ENCODE measurements at regions of chr4 and their contacts with region 1.

Region 1: GRCh38 chr4:20251796-20252655 is at the start of gene SLIT2:
- DNase-seq: peak; percentile 92
- H3K4me3 ChIP-seq: peak within 1 kb of the TSS; percentile 80
- H3K27ac ChIP-seq: peak within 1 kb of the TSS; percentile 68
- H3K4me1 ChIP-seq: peaks cover 35% of the 10 kb centered on the region
- H3K27me3 ChIP-seq: no peaks in the 10 kb centered on the region
- CTCF ChIP-seq: no peak
- total RNA-seq, gene SLIT2: 59.7 and 70.6 TPM in 2 replicates

Region 2: GRCh38 chr4:18689308-18690115 is 1562.5 kb before region 1 on chr4:
- CTCF ChIA-PET with region 1: no interaction called
- POLR2A ChIA-PET with region 1: no interaction called
- intact Hi-C with region 1: loop called (anchors 5 kb)
- DNase-seq: peak; percentile 69
- H3K4me3 ChIP-seq: no peak overlapping the region
- H3K27ac ChIP-seq: no peak overlapping the region
- H3K4me1 ChIP-seq: no peaks in the 10 kb centered on the region
- H3K27me3 ChIP-seq: no peaks in the 10 kb centered on the region
- CTCF ChIP-seq: peak; percentile 86

Region 3: DNA sequence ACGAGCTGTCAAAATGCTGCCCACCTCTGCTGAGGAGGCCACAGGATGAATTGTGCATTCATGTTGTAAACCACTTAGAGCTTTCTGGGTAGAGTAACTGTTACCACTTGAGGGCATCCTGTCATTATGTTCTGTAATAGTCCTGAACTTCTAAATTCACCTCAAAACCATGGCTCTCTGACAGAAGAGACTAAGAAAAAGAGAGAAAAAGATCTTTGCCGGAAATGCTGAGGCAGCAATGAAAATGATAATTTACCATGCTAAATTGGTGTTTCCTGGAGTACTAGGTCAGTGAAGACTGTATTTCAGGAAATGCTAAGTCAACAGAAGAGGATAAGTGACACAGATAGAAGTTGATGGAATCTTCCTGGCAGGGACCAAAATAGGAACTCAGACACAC is 942.6 kb before region 1 on chr4:
- CTCF ChIA-PET with region 1: no interaction called
- POLR2A ChIA-PET with region 1: no interaction called
- intact Hi-C with region 1: loop called (anchors 1 kb)
- DNase-seq: peak; percentile 96
- H3K4me3 ChIP-seq: no peak overlapping the region
- H3K27ac ChIP-seq: no peak overlapping the region
- H3K4me1 ChIP-seq: peaks cover 32% of the 10 kb centered on the region
- H3K27me3 ChIP-seq: no peaks in the 10 kb centered on the region
- CTCF ChIP-seq: peak; percentile 60

Region 4: DNA sequence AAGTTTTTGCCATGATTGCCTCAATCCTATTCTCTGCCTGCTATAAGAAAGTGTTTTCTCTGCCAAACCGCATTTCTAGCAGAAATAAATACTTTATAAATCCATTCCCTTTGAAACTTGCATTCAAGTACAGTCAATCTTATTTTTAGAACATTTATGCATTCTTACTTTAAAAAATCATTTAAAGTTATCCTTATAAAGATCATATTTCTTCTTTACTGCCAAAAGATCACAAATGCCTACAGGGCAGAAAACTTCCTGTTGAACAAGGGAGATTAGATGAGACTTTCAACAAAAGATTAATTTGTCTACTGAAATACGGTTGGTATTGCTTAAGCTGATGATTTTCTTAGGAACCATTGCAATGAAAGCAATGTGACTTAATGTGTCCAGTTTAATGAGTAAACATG is 207.5 kb before region 1 on chr4:
- CTCF ChIA-PET with region 1: no interaction called
- POLR2A ChIA-PET with region 1: no interaction called
- intact Hi-C with region 1: loop called (anchors 5 kb)
- DNase-seq: peak; percentile 65
- H3K4me3 ChIP-seq: no peak overlapping the region
- H3K27ac ChIP-seq: no peak overlapping the region
- H3K4me1 ChIP-seq: peaks cover 43% of the 10 kb centered on the region
- H3K27me3 ChIP-seq: no peaks in the 10 kb centered on the region
- CTCF ChIP-seq: no peak

Region 5: GRCh38 chr4:20428436-20429160 is 176.6 kb after region 1 on chr4:
- CTCF ChIA-PET with region 1: no interaction called
- POLR2A ChIA-PET with region 1: no interaction called
- intact Hi-C with region 1: loop called (anchors 5 kb)
- DNase-seq: peak; percentile 61
- H3K4me3 ChIP-seq: no peak overlapping the region
- H3K27ac ChIP-seq: no peak overlapping the region
- H3K4me1 ChIP-seq: peaks cover 40% of the 10 kb centered on the region
- H3K27me3 ChIP-seq: no peaks in the 10 kb centered on the region
- CTCF ChIP-seq: peak; percentile 56

Region 6: GRCh38 chr4:20684852-20685763 is 433.1 kb after region 1 on chr4:
- CTCF ChIA-PET with region 1: interaction called, 3 read pairs
- POLR2A ChIA-PET with region 1: no interaction called
- intact Hi-C with region 1: loop called (anchors 5 kb)
- DNase-seq: peak; percentile 57
- H3K4me3 ChIP-seq: no peak overlapping the region
- H3K27ac ChIP-seq: no peak overlapping the region
- H3K4me1 ChIP-seq: no peaks in the 10 kb centered on the region
- H3K27me3 ChIP-seq: no peaks in the 10 kb centered on the region
- CTCF ChIP-seq: peak; percentile 71

Measured in A673 (cell line).